ENCODE measurements at regions of chr6 and their contacts with region 1.

Region 1: GRCh38 chr6:10722820-10723566 is at the start of gene TMEM14C:
- DNase-seq: peak; percentile 99
- ATAC-seq: peak; percentile 92
- H3K4me3 ChIP-seq: peak within 1 kb of the TSS; percentile 69 to 92 (median 78)
- H3K27ac ChIP-seq: peak within 1 kb of the TSS; percentile 95
- H3K4me1 ChIP-seq: peaks cover 34% of the 10 kb centered on the region
- H3K27me3 ChIP-seq: no peaks in the 10 kb centered on the region
- CTCF ChIP-seq: peak; percentile 44
- EP300 ChIP-seq: peak in 1 of 2 experiments; percentile 58; a peak in 2 of 4 replicates
- POLR2A ChIP-seq: peak in 1 of 2 experiments; percentile 88; a peak in 3 of 4 replicates
- RAD21 ChIP-seq: no peak
- total RNA-seq, gene TMEM14C: 163 and 184 TPM in 2 replicates

Region 2: GRCh38 chr6:10505529-10505928 is 217.5 kb before region 1 on chr6:
- CTCF ChIA-PET with region 1: no interaction called
- POLR2A ChIA-PET with region 1: interaction called, 32 read pairs
- in situ Hi-C with region 1: no loop called
- intact Hi-C with region 1: loop called (anchors 1 kb)
- DNase-seq: peak; percentile 99
- ATAC-seq: peak; percentile 99
- H3K4me3 ChIP-seq: no peak overlapping the region
- H3K27ac ChIP-seq: no peak overlapping the region
- H3K4me1 ChIP-seq: peaks cover 24% of the 10 kb centered on the region
- H3K27me3 ChIP-seq: peaks cover 0 to 36% of the 10 kb centered on the region in 2 experiments; a peak in 4 of 5 replicates
- CTCF ChIP-seq: peak; percentile 64
- EP300 ChIP-seq: peak; percentile 91 to 95
- POLR2A ChIP-seq: no peak
- RAD21 ChIP-seq: peak; percentile 64; the same call in 1 of the 2 replicates

Region 3: DNA sequence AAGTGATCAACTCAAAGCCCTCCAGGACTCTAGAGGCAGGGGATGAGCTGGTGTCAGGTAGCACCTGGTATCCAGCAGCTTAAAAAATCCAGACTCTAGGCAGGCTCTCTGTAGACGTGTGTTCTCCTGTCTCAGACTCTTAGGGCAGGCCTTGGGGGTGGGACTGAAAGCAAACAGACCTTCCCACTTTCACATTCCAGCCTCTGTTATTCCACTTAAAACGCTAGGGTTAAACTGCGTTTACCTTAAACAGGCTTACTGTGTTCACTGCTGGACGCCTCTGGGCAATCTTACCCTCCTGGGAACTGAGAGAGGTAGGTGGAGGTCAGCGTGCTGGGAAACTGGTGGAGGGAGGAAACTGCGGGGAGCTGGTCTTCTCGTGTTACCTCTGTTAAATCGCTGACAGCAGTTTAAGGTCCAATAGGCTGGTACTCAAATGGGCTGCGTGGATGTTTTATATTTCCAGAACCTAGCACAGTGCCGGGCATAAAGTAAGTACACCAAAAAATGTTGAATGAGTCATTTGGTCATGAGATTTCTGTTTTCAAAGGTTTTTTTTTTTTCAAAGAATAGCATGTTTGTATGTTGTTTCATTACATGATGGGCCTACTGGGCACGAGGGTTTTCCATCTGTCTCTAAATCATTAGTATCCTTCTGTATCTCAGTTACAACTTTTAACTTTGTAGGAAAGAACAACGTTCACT is 201.7 kb before region 1 on chr6 and contains the start of gene GCNT2:
- CTCF ChIA-PET with region 1: no interaction called
- POLR2A ChIA-PET with region 1: interaction called, 15 read pairs
- in situ Hi-C with region 1: no loop called
- intact Hi-C with region 1: no loop called
- DNase-seq: peak; percentile 92
- ATAC-seq: peak; percentile 83
- H3K4me3 ChIP-seq: peak within 1 kb of the TSS; percentile 34 to 61 (median 50)
- H3K27ac ChIP-seq: peak within 1 kb of the TSS; percentile 30
- H3K4me1 ChIP-seq: peaks cover 42% of the 10 kb centered on the region
- H3K27me3 ChIP-seq: no peaks in the 10 kb centered on the region
- CTCF ChIP-seq: 0 out of 2 replicates have a peak, but pooled peaks have one; percentile 3
- EP300 ChIP-seq: no peak
- POLR2A ChIP-seq: peak in 1 of 2 experiments; percentile 52; a peak in 2 of 4 replicates
- RAD21 ChIP-seq: no peak
- total RNA-seq, gene GCNT2: 25.1 and 31.9 TPM in 2 replicates

Region 4: DNA sequence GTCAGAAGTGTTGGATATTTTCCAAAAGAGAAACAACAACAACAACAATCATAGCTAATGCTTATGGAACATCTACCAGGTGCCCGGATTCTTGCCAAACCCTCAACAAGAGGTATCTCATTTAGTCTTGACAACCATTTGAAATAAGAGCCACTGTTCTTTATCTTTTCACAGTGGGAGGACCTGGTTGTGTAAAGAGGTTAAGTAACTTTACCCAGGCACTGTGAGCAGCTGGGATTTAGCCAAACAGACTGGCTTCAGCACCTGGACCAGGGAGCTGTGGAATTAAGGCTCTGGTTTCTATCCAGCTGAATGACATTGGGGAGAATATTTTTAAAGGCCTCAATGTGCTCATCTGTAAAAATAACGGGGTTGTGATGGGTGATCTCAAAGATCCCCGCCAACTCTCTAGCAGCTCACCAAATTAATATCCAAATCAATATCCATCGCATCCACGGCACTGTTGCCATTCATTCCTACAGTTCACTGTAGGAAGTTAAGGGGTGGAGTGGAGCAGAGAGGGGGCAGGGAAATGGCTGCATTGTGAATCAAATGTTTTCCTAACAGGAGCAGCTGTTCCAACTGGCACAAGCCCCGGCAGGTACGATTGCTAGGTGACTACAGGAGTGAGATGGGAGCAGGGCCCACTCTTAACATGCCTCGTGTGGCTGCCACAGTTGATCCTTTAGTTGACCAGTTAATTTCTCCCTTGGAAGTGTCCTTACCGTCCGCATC is 140.1 kb before region 1 on chr6:
- CTCF ChIA-PET with region 1: no interaction called
- POLR2A ChIA-PET with region 1: no interaction called
- in situ Hi-C with region 1: no loop called
- intact Hi-C with region 1: no loop called
- DNase-seq: peak; percentile 58
- ATAC-seq: peak; percentile 56
- H3K4me3 ChIP-seq: no peak overlapping the region
- H3K27ac ChIP-seq: no peak overlapping the region
- H3K4me1 ChIP-seq: peaks cover 27% of the 10 kb centered on the region
- H3K27me3 ChIP-seq: no peaks in the 10 kb centered on the region
- CTCF ChIP-seq: no peak
- EP300 ChIP-seq: no peak
- POLR2A ChIP-seq: no peak
- RAD21 ChIP-seq: no peak

Region 5: DNA sequence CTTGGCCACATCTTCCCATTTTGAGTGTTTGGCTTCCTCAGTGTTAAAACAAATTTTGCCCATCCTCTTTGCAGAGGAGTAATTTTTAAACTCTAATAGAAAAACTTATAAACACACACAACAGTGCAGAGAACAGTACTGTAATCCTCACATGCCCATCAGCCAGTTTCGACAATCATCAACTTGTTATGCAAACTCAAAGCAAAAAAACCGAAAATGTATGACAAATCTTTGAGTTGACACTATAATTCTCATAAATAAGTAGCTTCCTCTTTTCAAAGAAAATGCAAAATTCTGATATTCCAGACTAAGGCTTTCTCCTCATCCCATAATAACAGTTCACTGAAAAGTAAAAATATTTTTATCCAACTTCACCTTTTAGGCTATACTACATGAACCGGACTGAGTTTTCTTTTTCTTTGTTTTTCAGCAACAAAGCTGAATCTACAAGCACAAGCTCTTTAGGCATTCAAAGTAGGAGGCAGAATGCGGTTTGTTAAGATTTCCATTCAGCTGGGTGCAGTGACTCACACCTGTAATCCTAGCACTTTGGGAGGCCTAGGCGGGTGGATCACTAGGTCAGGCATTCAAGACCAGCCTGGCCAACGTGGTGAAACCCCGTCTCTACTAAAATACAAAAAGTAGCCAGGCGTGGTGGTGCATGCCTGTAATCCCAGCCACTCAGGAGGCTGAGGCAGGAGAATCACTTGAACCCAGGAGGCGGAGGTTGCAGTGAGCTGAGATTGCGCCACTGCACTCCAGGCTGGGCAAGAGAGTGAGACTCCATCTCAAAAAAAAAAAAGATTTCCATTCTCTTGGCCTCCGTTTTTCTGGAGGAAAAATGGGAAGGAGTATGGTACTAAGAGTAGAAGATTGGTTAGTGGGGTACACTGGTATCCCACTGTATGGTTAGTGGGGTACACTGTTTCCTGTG is 127.0 kb before region 1 on chr6:
- CTCF ChIA-PET with region 1: no interaction called
- POLR2A ChIA-PET with region 1: no interaction called
- in situ Hi-C with region 1: no loop called
- intact Hi-C with region 1: no loop called
- DNase-seq: no peak
- ATAC-seq: no peak
- H3K4me3 ChIP-seq: no peak overlapping the region
- H3K27ac ChIP-seq: no peak overlapping the region
- H3K4me1 ChIP-seq: peaks cover 8% of the 10 kb centered on the region
- H3K27me3 ChIP-seq: no peaks in the 10 kb centered on the region
- CTCF ChIP-seq: no peak
- EP300 ChIP-seq: no peak
- POLR2A ChIP-seq: no peak
- RAD21 ChIP-seq: no peak

Region 6: DNA sequence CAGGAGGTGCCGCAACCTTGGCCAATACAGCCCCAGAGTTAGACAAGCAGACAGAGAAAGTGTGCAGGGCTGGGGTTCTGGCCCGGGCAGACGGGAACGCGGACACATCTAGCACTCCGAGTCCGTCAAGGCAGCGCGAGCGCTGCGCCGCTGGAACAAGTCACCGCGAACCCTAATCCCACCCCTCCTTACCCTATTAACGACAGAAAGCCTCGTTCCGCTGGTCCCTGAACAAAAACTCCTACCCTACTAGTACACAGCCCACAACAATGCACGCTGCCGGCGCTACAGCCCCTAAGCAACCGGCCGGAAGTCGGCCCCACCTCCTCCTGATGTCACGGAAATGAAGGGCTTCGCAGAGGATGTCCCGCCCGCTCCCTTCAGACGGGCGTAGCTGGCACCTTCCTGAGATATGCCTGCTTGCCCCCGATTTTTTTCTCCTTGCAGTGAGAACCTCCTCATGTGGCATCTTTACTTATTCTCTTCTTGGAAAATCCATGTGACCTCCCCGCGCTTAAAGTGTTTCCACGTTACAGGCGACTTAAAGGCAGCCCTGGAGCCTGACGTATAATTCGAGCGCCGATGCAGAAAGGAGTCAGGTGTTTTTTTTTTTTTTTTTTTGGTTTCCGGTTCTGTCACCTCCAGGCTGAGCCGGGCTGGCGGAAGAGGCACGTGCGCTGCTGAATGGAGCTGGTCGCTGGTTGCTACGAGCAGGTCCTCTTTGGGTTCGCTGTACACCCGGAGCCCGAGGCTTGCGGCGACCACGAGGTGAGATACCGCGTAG is 28.5 kb before region 1 on chr6 and contains the starts of genes C6orf52 and PAK1IP1:
- CTCF ChIA-PET with region 1: no interaction called
- POLR2A ChIA-PET with region 1: interaction called, 79 read pairs
- in situ Hi-C with region 1: no loop called
- intact Hi-C with region 1: loop called (anchors 1 kb)
- DNase-seq: peak; percentile 94
- ATAC-seq: peak; percentile 98
- H3K4me3 ChIP-seq: peak within 1 kb of the TSS; percentile 78 to 98 (median 97)
- H3K27ac ChIP-seq: peak within 1 kb of the TSS; percentile 96
- H3K4me1 ChIP-seq: peaks cover 44% of the 10 kb centered on the region
- H3K27me3 ChIP-seq: no peaks in the 10 kb centered on the region; a peak in 1 of 5 replicates
- CTCF ChIP-seq: peak; percentile 6; the same call in 1 of the 2 replicates
- EP300 ChIP-seq: peak; percentile 27 to 45; a peak in 3 of 4 replicates
- POLR2A ChIP-seq: peak; percentile 92 to 93
- RAD21 ChIP-seq: peak; percentile 37; the same call in 1 of the 2 replicates
- total RNA-seq, gene C6orf52: 0.53 and 0.66 TPM in 2 replicates
- total RNA-seq, gene PAK1IP1: 66.2 and 106 TPM in 2 replicates

Region 7: GRCh38 chr6:10747251-10747972 is 24.4 kb after region 1 on chr6 and contains the start of gene TMEM14B:
- CTCF ChIA-PET with region 1: no interaction called
- POLR2A ChIA-PET with region 1: interaction called, 332 read pairs
- in situ Hi-C with region 1: no loop called
- intact Hi-C with region 1: loop called (anchors 1 kb)
- DNase-seq: peak; percentile 97
- ATAC-seq: peak; percentile 98
- H3K4me3 ChIP-seq: peak within 1 kb of the TSS; percentile 73 to 87 (median 84)
- H3K27ac ChIP-seq: peak within 1 kb of the TSS; percentile 75
- H3K4me1 ChIP-seq: peaks cover 29% of the 10 kb centered on the region
- H3K27me3 ChIP-seq: no peaks in the 10 kb centered on the region
- CTCF ChIP-seq: peak; percentile 24; the same call in 1 of the 2 replicates
- EP300 ChIP-seq: peak in 1 of 2 experiments; percentile 37; a peak in 3 of 4 replicates
- POLR2A ChIP-seq: peak; percentile 89 to 95
- RAD21 ChIP-seq: peak; percentile 25
- total RNA-seq, gene TMEM14B: 191 and 200 TPM in 2 replicates

Region 8: GRCh38 chr6:10793695-10794094 is 70.7 kb after region 1 on chr6:
- CTCF ChIA-PET with region 1: no interaction called
- POLR2A ChIA-PET with region 1: no interaction called
- in situ Hi-C with region 1: no loop called
- intact Hi-C with region 1: loop called (anchors 2 kb)
- DNase-seq: no peak
- ATAC-seq: no peak
- H3K4me3 ChIP-seq: no peak overlapping the region; a peak in 1 of 6 replicates
- H3K27ac ChIP-seq: peak overlapping the region; percentile 30
- H3K4me1 ChIP-seq: peaks cover 24% of the 10 kb centered on the region
- H3K27me3 ChIP-seq: no peaks in the 10 kb centered on the region
- CTCF ChIP-seq: no peak
- EP300 ChIP-seq: no peak
- POLR2A ChIP-seq: no peak
- RAD21 ChIP-seq: no peak

Region 9: DNA sequence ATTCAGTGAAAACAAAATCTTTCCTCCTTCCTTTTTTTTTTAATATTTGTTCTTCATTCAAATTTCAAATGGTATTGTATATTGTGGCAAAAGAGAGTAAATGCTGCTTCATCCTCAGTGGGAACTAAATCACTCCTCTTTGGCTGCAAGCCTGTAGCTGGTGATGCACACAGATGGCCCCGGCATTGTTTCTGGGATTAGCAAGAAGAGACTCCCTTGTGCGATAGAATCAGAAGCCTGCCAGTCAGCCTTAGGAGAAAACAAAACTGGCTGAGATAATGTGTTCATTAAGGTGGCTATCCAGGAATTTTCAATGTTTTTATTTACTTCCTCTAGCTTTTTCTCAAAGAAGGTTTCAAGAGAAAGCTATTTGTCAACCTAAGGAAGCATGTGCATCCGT is 341.8 kb after region 1 on chr6:
- CTCF ChIA-PET with region 1: no interaction called
- POLR2A ChIA-PET with region 1: no interaction called
- in situ Hi-C with region 1: no loop called
- intact Hi-C with region 1: loop called (anchors 1 kb)
- DNase-seq: no peak
- ATAC-seq: no peak
- H3K4me3 ChIP-seq: no peak overlapping the region
- H3K27ac ChIP-seq: no peak overlapping the region
- H3K4me1 ChIP-seq: peaks cover 47% of the 10 kb centered on the region
- H3K27me3 ChIP-seq: no peaks in the 10 kb centered on the region
- CTCF ChIP-seq: no peak
- EP300 ChIP-seq: no peak
- POLR2A ChIP-seq: no peak
- RAD21 ChIP-seq: no peak